Activated CD8-positive, alpha-beta T cell treated with anti-CD3 and anti-CD28 coated beads, Interleukin-2, amount 10 ng/mL, durations not matched to agents 7 days and 5 days (primary cell): ENCODE measurements at regions of chr14 and their contacts with region 1.

Region 1: GRCh38 chr14:22653012-22653621 is 9.0 kb upstream of the OR6J1 start:
- DNase-seq: peak; percentile 63
- ATAC-seq: peak; percentile 87
- H3K4me3 Mint-ChIP-seq: no peak overlapping the region
- H3K27ac Mint-ChIP-seq: no peak overlapping the region
- H3K4me1 Mint-ChIP-seq: peaks cover 18% of the 10 kb centered on the region
- H3K27me3 Mint-ChIP-seq: peaks cover 2% of the 10 kb centered on the region

Region 2: DNA sequence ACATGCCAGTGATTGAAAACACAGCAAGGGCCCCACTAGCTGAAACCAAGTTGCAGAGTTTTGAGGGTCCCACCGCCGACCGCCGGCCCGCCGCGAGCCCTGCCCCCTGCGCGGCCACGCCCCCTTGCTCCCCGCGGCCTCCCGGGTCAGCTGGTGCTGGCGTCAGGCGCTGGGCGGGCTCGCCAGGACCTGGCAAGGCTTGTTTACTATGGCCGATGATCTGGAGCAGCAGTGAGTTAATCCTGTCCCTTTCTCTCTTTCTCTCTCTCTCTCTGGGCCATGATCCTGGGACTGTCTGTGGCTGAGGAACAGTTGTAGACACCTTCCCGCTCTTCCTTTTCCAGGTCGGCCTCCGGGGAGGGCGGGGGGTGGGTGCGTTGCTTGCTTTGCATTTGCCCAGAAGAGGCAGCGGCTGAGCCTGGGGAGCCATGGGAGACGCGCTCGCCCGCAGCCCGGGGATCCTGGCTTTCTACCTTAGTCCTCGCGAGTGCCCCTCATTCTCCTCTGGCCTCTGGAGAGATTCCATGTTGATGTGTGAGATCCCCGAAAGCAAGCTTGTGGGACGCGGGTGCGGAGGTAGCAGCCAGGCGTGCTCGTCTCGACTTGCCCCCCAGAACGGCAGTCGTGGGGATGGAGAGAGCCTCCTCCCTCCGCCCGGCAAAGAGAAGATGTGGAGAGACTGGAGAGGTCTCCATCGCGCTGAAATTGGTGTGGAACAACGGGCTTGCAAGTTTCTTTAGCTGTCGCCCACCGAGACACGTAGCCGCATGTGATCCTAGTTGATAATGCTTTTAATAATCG is 54.8 kb before region 1 on chr14 and contains the start of gene ABHD4:
- CTCF ChIA-PET with region 1: interaction called, 23 read pairs
- POLR2A ChIA-PET with region 1: no interaction called
- DNase-seq: peak; percentile 77
- ATAC-seq: peak; percentile 91
- H3K4me3 Mint-ChIP-seq: peak within 1 kb of the TSS; percentile 92
- H3K27ac Mint-ChIP-seq: peak within 1 kb of the TSS; percentile 84
- H3K4me1 Mint-ChIP-seq: peaks cover 30% of the 10 kb centered on the region
- H3K27me3 Mint-ChIP-seq: peaks cover 19% of the 10 kb centered on the region
- total RNA-seq, gene ABHD4: 8.0 to 8.5 TPM

Region 3: DNA sequence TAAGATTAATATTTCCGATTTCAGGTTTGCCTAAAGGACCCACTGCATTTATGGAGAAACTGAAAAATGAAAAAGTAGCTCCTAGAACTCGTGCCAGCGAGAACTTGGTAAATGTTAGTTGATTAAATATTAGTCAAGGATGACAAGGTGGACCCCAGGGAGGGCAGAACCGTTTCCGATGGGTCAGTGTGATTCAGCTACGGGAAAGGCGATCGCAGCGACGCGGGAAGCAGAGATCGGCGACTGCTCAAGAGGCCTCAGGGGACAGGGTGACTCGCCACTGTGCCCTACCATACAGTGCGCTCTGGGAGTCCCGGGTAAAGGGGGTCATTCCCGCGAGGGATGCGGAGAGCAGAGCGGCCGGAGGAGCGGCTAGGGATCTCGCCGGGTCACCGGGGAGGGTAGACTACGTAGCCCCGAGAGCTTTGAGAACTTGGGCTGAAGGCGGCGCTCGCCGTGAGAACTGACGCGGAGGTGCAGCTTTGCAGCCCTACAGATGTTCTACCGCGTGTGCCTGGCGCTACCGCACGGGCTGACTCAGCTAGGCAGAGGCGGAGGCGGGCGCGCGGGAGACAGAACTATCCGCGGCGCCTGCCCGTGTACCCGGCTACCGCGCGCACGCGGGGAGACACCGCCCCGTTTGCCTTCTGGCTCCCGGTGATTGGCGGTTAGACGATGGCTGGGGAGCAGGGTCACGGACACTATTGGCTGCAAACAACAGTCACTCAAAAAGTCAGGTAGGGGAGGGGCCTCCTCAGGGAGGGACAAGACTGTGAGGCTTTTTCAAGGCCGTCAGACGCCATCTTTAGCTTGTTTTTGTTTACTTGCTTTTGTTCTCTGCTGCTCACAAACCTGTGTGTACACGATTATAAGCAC is 353.7 kb after region 1 on chr14:
- CTCF ChIA-PET with region 1: no interaction called
- POLR2A ChIA-PET with region 1: no interaction called
- DNase-seq: peak; percentile 98
- ATAC-seq: peak; percentile 99
- H3K4me3 Mint-ChIP-seq: peak overlapping the region; percentile 94
- H3K27ac Mint-ChIP-seq: peak overlapping the region; percentile 98
- H3K4me1 Mint-ChIP-seq: peaks cover 51% of the 10 kb centered on the region
- H3K27me3 Mint-ChIP-seq: no peaks in the 10 kb centered on the region